PC-9 (cell line): ENCODE measurements at regions of chr14 and their contacts with region 1.

Region 1: GRCh38 chr14:54566410-54567223 is at the start of gene SAMD4A:
- DNase-seq: peak; percentile 74 to 81
- H3K4me3 ChIP-seq: peak within 1 kb of the TSS; percentile 78
- H3K27ac ChIP-seq: peak within 1 kb of the TSS; percentile 71
- H3K4me1 ChIP-seq: peaks cover 39% of the 10 kb centered on the region
- H3K27me3 ChIP-seq: no peaks in the 10 kb centered on the region
- CTCF ChIP-seq: peak; percentile 29; the same call in 1 of the 2 replicates
- total RNA-seq, gene SAMD4A: 18.3 and 20.7 TPM in 2 replicates

Region 2: GRCh38 chr14:54440873-54441868 is 125.4 kb before region 1 on chr14 and contains the start of gene CNIH1:
- CTCF ChIA-PET with region 1: no interaction called
- POLR2A ChIA-PET with region 1: no interaction called
- intact Hi-C with region 1: loop called (anchors 1 kb)
- DNase-seq: peak; percentile 74 to 93
- H3K4me3 ChIP-seq: peak within 1 kb of the TSS; percentile 72
- H3K27ac ChIP-seq: peak within 1 kb of the TSS; percentile 73
- H3K4me1 ChIP-seq: peaks cover 37% of the 10 kb centered on the region
- H3K27me3 ChIP-seq: no peaks in the 10 kb centered on the region
- CTCF ChIP-seq: peak; percentile 88
- total RNA-seq, gene CNIH1: 70.6 and 114 TPM in 2 replicates

Region 3: GRCh38 chr14:54691525-54692283 is 125.1 kb after region 1 on chr14:
- CTCF ChIA-PET with region 1: interaction called, 5 read pairs
- POLR2A ChIA-PET with region 1: no interaction called
- intact Hi-C with region 1: loop called (anchors 1 kb)
- DNase-seq: peak; percentile 49 to 73
- H3K4me3 ChIP-seq: no peak overlapping the region
- H3K27ac ChIP-seq: no peak overlapping the region
- H3K4me1 ChIP-seq: peaks cover 4% of the 10 kb centered on the region
- H3K27me3 ChIP-seq: no peaks in the 10 kb centered on the region
- CTCF ChIP-seq: peak; percentile 87

Region 4: GRCh38 chr14:54773171-54773975 is 206.8 kb after region 1 on chr14:
- CTCF ChIA-PET with region 1: interaction called, 14 read pairs
- POLR2A ChIA-PET with region 1: interaction called, 5 read pairs
- intact Hi-C with region 1: loop called (anchors 1 kb)
- DNase-seq: peak; percentile 89 to 97
- H3K4me3 ChIP-seq: peak overlapping the region; percentile 40; the same call in 1 of the 2 replicates
- H3K27ac ChIP-seq: peak overlapping the region; percentile 89
- H3K4me1 ChIP-seq: peaks cover 24% of the 10 kb centered on the region
- H3K27me3 ChIP-seq: no peaks in the 10 kb centered on the region
- CTCF ChIP-seq: peak; percentile 77

Region 5: GRCh38 chr14:54805521-54806322 is 239.1 kb after region 1 on chr14:
- CTCF ChIA-PET with region 1: interaction called, 9 read pairs
- POLR2A ChIA-PET with region 1: no interaction called
- intact Hi-C with region 1: loop called (anchors 1 kb)
- DNase-seq: peak; percentile 66 to 81
- H3K4me3 ChIP-seq: no peak overlapping the region; the same call in 1 of the 2 replicates
- H3K27ac ChIP-seq: no peak overlapping the region
- H3K4me1 ChIP-seq: 0 out of 2 replicates have a peak, but pooled peaks cover 4% of the 10 kb centered on the region
- H3K27me3 ChIP-seq: no peaks in the 10 kb centered on the region
- CTCF ChIP-seq: peak; percentile 91

Region 6: GRCh38 chr14:54902521-54903420 is 336.2 kb after region 1 on chr14 and contains the start of gene GCH1:
- CTCF ChIA-PET with region 1: no interaction called
- POLR2A ChIA-PET with region 1: no interaction called
- intact Hi-C with region 1: loop called (anchors 1 kb)
- DNase-seq: peak; percentile 64 to 82
- H3K4me3 ChIP-seq: peak within 1 kb of the TSS; percentile 81
- H3K27ac ChIP-seq: peak within 1 kb of the TSS; percentile 25
- H3K4me1 ChIP-seq: peaks cover 9% of the 10 kb centered on the region
- H3K27me3 ChIP-seq: no peaks in the 10 kb centered on the region
- CTCF ChIP-seq: peak; percentile 65
- total RNA-seq, gene GCH1: 4.1 and 5.1 TPM in 2 replicates

Region 7: DNA sequence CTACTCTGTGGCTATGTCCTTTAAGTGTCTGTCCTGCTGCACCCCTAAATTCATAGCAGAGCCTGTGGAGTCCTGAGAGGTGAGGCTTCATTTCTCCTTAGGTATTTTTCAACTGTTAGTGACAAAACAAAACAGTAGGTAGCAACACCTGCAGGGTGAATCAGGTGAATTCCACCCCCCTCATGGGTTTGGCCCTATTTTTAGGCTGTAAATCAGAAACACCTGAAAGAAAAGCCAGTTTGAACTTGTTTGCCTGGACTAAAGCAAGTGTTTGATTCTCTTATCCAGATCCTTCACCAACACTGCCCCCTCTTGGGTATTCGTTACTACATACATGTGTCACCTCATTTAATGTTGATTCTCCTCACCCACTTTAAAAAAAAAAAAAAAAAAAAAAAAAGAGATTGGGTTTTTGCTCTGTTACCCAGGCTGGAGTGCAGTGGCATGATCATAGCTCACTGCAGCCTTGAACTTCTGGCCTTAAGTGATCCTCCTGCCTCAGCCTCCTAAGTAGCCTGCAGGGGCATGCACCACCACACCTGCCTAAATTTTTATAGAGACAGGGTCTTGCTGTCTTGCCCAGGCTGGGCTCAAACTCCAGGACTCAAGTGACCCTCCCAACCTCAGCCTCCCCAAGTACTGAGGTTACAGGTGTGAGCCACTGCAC is 863.5 kb after region 1 on chr14:
- CTCF ChIA-PET with region 1: no interaction called
- POLR2A ChIA-PET with region 1: no interaction called
- intact Hi-C with region 1: loop called (anchors 5 kb)
- DNase-seq: peak; percentile 70 to 91
- H3K4me3 ChIP-seq: no peak overlapping the region
- H3K27ac ChIP-seq: peak overlapping the region; percentile 37; the same call in 1 of the 2 replicates
- H3K4me1 ChIP-seq: peaks cover 29% of the 10 kb centered on the region
- H3K27me3 ChIP-seq: no peaks in the 10 kb centered on the region
- CTCF ChIP-seq: peak; percentile 64